PC-3 (cell line): ENCODE measurements at regions of chr3 and their contacts with region 1.

Region 1: DNA sequence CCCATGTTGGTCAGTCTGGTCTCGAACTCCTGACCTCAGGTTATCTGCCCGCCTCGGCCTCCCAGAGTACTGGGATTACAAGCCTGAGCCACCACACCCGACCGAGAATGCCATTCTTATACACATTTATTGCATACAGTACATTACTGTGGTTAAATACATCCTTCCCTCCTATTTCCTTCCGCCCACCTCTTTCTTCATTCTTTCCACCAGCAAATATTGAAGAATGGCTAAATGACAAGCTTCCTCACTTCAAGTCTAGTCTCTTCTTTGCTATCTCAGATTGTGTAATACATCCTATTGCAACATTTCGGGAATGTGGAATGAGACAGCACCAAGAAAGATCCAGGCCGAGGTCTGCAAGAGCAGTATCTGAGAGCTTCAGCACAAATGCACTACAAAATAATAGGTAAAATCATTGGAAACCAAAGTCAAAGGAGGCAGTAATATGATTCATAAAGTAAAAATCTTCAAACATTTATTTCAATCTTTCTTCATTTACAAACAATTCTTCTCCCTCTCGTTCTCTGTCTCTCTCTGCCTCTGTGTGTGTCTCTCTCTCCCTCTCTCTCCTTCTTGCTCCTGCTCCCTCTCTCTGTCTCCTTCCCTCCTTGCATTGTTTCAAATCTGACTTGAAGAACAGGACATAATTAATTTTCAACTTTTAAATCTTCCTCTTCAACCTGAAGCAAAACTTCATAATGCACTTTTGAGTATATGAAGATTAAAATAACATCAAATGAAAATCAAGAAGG is 94.7 kb upstream of the TGFBR2 start:
- DNase-seq: peak; percentile 98
- ATAC-seq: peak; percentile 74
- H3K4me3 ChIP-seq: no peak overlapping the region
- H3K27ac ChIP-seq: peak overlapping the region; percentile 71
- H3K4me1 ChIP-seq: peaks cover 43% of the 10 kb centered on the region
- H3K27me3 ChIP-seq: no peaks in the 10 kb centered on the region
- CTCF ChIP-seq: no peak

Region 2: GRCh38 chr3:30078736-30079135 is 433.0 kb before region 1 on chr3:
- CTCF ChIA-PET with region 1: no interaction called
- POLR2A ChIA-PET with region 1: no interaction called
- intact Hi-C with region 1: no loop called
- DNase-seq: no peak
- ATAC-seq: no peak
- H3K4me3 ChIP-seq: no peak overlapping the region
- H3K27ac ChIP-seq: no peak overlapping the region
- H3K4me1 ChIP-seq: peaks cover 12% of the 10 kb centered on the region
- H3K27me3 ChIP-seq: no peaks in the 10 kb centered on the region
- CTCF ChIP-seq: no peak

Region 3: GRCh38 chr3:30232142-30232541 is 279.6 kb before region 1 on chr3:
- CTCF ChIA-PET with region 1: no interaction called
- POLR2A ChIA-PET with region 1: no interaction called
- intact Hi-C with region 1: no loop called
- DNase-seq: no peak
- ATAC-seq: no peak
- H3K4me3 ChIP-seq: no peak overlapping the region
- H3K27ac ChIP-seq: no peak overlapping the region
- H3K4me1 ChIP-seq: peaks cover 31% of the 10 kb centered on the region
- H3K27me3 ChIP-seq: no peaks in the 10 kb centered on the region
- CTCF ChIP-seq: no peak

Region 4: DNA sequence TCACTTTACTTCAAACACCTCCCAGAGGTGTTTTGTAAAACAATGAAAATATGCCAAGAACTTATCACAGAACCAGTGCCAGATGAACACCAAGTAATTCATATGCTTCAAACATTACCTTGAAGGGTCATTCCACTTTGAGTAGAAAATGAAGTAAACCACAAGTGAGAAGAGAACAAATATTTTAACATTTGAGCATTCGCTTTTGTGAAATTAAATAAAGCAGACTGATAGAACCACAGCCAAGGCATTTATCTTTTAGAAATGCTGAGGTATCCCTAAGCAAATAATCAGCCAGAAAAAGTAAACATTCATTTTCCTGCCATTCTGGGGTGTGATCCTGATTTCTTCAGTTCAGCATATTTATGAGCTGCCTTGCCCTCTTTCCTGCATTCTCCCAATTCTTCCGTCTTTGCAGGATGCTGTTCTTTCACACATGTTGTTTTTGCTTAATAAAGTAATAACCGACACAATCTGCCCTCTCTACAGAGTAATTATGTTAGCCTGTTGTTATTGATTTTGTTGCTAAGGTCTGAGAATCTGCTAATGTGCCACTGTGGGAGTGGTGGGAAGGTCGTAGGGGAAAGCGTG is 140.9 kb before region 1 on chr3:
- CTCF ChIA-PET with region 1: no interaction called
- POLR2A ChIA-PET with region 1: no interaction called
- intact Hi-C with region 1: loop called (anchors 5 kb)
- DNase-seq: peak; percentile 83
- ATAC-seq: peak; percentile 94
- H3K4me3 ChIP-seq: no peak overlapping the region
- H3K27ac ChIP-seq: peak overlapping the region; percentile 39
- H3K4me1 ChIP-seq: peaks cover 30% of the 10 kb centered on the region
- H3K27me3 ChIP-seq: no peaks in the 10 kb centered on the region
- CTCF ChIP-seq: no peak

Region 5: DNA sequence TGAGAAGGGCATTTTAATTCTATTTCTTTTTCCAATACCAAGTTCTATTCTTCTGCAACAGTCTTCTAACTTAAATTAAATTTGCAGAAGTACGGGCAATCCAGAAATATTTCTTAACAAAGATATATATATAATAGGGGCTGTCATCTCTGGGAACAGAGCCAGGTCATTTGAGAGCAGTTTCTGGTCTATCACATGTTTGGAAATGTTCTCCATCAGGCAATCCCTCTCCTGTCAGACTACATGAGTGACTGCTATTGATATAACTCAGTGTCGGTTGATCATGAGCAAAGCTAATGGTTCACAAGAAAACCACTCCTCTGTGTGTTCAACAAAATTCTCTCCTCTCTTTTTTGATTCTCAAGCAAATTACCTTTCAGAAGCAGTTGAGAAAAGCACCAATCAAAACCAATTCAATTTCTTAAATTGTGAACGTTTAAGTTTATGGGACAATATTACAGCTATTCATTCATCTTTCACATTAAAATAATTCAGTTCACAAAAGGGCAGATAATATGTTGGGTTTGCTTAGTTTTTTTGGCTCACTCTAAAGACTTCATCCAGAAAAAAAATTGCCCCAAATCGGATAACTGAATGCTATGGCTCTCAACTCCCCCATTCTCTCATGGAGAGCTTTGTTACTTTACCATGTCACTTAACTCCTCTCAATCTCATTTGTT is 58.2 kb before region 1 on chr3:
- CTCF ChIA-PET with region 1: no interaction called
- POLR2A ChIA-PET with region 1: no interaction called
- intact Hi-C with region 1: no loop called
- DNase-seq: no peak
- ATAC-seq: no peak
- H3K4me3 ChIP-seq: no peak overlapping the region
- H3K27ac ChIP-seq: no peak overlapping the region
- H3K4me1 ChIP-seq: peaks cover 2% of the 10 kb centered on the region; the same call in 1 of the 2 replicates
- H3K27me3 ChIP-seq: no peaks in the 10 kb centered on the region
- CTCF ChIP-seq: no peak

Region 6: GRCh38 chr3:30475038-30475808 is 36.5 kb before region 1 on chr3:
- CTCF ChIA-PET with region 1: no interaction called
- POLR2A ChIA-PET with region 1: no interaction called
- intact Hi-C with region 1: loop called (anchors 2 kb)
- DNase-seq: no peak
- ATAC-seq: no peak
- H3K4me3 ChIP-seq: no peak overlapping the region
- H3K27ac ChIP-seq: no peak overlapping the region
- H3K4me1 ChIP-seq: peaks cover 35% of the 10 kb centered on the region
- H3K27me3 ChIP-seq: no peaks in the 10 kb centered on the region
- CTCF ChIP-seq: no peak

Region 7: GRCh38 chr3:30493911-30494311 is 17.8 kb before region 1 on chr3:
- CTCF ChIA-PET with region 1: no interaction called
- POLR2A ChIA-PET with region 1: no interaction called
- intact Hi-C with region 1: loop called (anchors 2 kb)
- DNase-seq: no peak
- ATAC-seq: no peak
- H3K4me3 ChIP-seq: no peak overlapping the region
- H3K27ac ChIP-seq: no peak overlapping the region
- H3K4me1 ChIP-seq: peaks cover 18% of the 10 kb centered on the region; the same call in 1 of the 2 replicates
- H3K27me3 ChIP-seq: no peaks in the 10 kb centered on the region
- CTCF ChIP-seq: no peak

Region 8: GRCh38 chr3:30578479-30578878 is 66.8 kb after region 1 on chr3:
- CTCF ChIA-PET with region 1: no interaction called
- POLR2A ChIA-PET with region 1: no interaction called
- intact Hi-C with region 1: loop called (anchors 1 kb)
- DNase-seq: peak; percentile 94
- ATAC-seq: peak; percentile 91
- H3K4me3 ChIP-seq: no peak overlapping the region
- H3K27ac ChIP-seq: peak overlapping the region; percentile 83
- H3K4me1 ChIP-seq: peaks cover 22% of the 10 kb centered on the region
- H3K27me3 ChIP-seq: no peaks in the 10 kb centered on the region
- CTCF ChIP-seq: no peak

Region 9: GRCh38 chr3:30779686-30780287 is 268.1 kb after region 1 on chr3:
- CTCF ChIA-PET with region 1: no interaction called
- POLR2A ChIA-PET with region 1: no interaction called
- intact Hi-C with region 1: no loop called
- DNase-seq: peak; percentile 72
- ATAC-seq: no peak
- H3K4me3 ChIP-seq: no peak overlapping the region
- H3K27ac ChIP-seq: no peak overlapping the region
- H3K4me1 ChIP-seq: peaks cover 21% of the 10 kb centered on the region
- H3K27me3 ChIP-seq: no peaks in the 10 kb centered on the region
- CTCF ChIP-seq: peak; percentile 80